CD4-positive, alpha-beta memory T cell (primary cell): ENCODE measurements at regions of chr5 and their contacts with region 1.

Region 1: GRCh38 chr5:159209438-159210305 is at the start of gene RNF145:
- DNase-seq: peak; percentile 93 to 96 (median 94)
- H3K4me3 ChIP-seq: peak within 1 kb of the TSS; percentile 82 to 85
- H3K4me3 Mint-ChIP-seq: peak within 1 kb of the TSS; percentile 93 to 99 (median 96)
- H3K27ac ChIP-seq: peak within 1 kb of the TSS; percentile 87
- H3K27ac Mint-ChIP-seq: peak within 1 kb of the TSS; percentile 96 to 100 (median 98)
- H3K4me1 ChIP-seq: peaks cover 33% of the 10 kb centered on the region
- H3K4me1 Mint-ChIP-seq: peaks cover 32 to 55% (median 38%) of the 10 kb centered on the region in 4 donors
- H3K27me3 ChIP-seq: no peaks in the 10 kb centered on the region
- H3K27me3 Mint-ChIP-seq: peaks cover 0 to 1% of the 10 kb centered on the region in 2 donors
- total RNA-seq, gene RNF145: 62.4 to 67.8 TPM

Region 2: GRCh38 chr5:158979749-158980521 is 229.7 kb before region 1 on chr5:
- CTCF ChIA-PET with region 1: no interaction called
- POLR2A ChIA-PET with region 1: no interaction called
- intact Hi-C with region 1: no loop called
- DNase-seq: no peak
- H3K4me3 ChIP-seq: no peak overlapping the region
- H3K4me3 Mint-ChIP-seq: no peak overlapping the region
- H3K27ac ChIP-seq: no peak overlapping the region
- H3K27ac Mint-ChIP-seq: peak overlapping the region in 1 of 7 donors; percentile 0
- H3K4me1 ChIP-seq: no peaks in the 10 kb centered on the region
- H3K4me1 Mint-ChIP-seq: peaks cover 0 to 2% (median under 1%) of the 10 kb centered on the region in 4 donors
- H3K27me3 ChIP-seq: no peaks in the 10 kb centered on the region
- H3K27me3 Mint-ChIP-seq: peaks cover 3 to 5% of the 10 kb centered on the region in 2 donors

Region 3: DNA sequence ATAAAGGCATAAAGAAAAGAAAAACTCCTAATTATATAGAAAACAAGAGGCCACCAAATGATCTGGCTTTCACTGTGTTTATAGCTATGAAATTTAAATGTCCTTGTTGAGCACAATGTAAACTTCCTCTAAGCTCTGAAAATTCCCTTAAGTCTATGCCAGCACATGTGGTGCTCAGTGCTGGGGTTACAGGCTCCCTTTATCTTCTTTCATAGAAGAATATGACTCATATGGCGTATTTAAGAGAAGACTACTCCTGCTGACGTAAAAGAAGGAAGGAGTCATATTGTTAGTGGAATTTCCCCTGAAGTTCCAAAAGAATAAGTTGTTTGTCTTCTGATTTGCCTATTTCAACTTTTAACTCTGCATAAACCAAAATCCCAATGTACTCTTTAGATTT is 30.7 kb before region 1 on chr5:
- CTCF ChIA-PET with region 1: interaction called, 7 read pairs
- POLR2A ChIA-PET with region 1: interaction called, 27 read pairs
- intact Hi-C with region 1: loop called (anchors 1 kb)
- DNase-seq: peak in 2 of 5 donors; percentile 6 to 58
- H3K4me3 ChIP-seq: no peak overlapping the region
- H3K4me3 Mint-ChIP-seq: peak overlapping the region in 1 of 8 donors; percentile 1
- H3K27ac ChIP-seq: no peak overlapping the region
- H3K27ac Mint-ChIP-seq: peak overlapping the region; percentile 37 to 90 (median 81)
- H3K4me1 ChIP-seq: peaks cover 82% of the 10 kb centered on the region
- H3K4me1 Mint-ChIP-seq: peaks cover 45 to 88% (median 63%) of the 10 kb centered on the region in 4 donors
- H3K27me3 ChIP-seq: no peaks in the 10 kb centered on the region
- H3K27me3 Mint-ChIP-seq: no peaks in the 10 kb centered on the region

Region 4: DNA sequence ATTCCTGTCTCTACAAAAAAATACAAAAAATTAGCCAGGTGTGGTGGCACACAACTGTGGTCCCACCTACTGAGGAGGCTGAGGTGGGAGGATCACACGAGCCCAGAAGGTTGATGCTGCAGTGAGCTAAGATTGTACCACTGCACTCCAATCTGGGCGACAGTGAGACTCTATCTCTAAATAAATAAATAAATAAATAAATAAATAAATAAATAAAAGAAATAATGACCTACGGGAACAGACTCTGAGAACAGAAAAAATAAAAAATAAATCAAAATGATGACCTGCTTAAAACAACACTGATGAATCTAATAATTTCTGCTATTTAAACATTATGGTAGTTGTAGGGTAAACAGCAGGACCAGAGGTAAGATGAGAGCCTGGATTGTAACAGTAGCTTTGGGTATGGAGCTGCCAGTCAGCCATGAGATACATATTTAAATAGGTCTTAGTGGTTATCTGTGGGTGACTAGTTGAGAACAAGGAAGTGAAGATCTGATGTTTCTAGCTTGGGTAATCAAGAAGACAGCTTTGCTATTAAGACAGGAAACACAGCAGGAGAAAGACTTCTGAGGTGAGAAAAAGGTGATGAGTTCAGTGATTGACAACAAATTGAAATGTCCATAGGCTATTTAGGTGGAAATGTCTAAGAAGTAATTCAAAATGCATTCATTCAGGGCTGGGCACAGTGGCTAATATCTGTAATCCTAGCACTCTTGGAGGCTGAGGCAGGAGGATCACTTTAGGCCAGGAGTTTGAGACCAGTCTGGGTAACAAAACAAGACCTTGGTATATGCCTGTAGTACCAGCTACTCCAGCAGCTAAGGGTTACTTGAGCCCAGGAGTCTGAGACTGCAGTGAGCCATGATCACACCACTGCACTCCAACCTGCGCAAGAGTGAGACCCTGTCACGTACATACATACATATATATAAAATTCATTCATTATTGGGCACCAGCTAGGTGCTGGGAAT is 11.3 kb before region 1 on chr5:
- CTCF ChIA-PET with region 1: interaction called, 20 read pairs
- POLR2A ChIA-PET with region 1: interaction called, 61 read pairs
- intact Hi-C with region 1: loop called (anchors 1 kb)
- DNase-seq: peak in 4 of 5 donors; percentile 23 to 33 (median 32)
- H3K4me3 ChIP-seq: no peak overlapping the region
- H3K4me3 Mint-ChIP-seq: peak overlapping the region in 7 of 8 donors; percentile 1 to 56 (median 32)
- H3K27ac ChIP-seq: no peak overlapping the region
- H3K27ac Mint-ChIP-seq: peak overlapping the region; percentile 17 to 84 (median 63)
- H3K4me1 ChIP-seq: peaks cover 49% of the 10 kb centered on the region
- H3K4me1 Mint-ChIP-seq: peaks cover 49 to 83% (median 68%) of the 10 kb centered on the region in 4 donors
- H3K27me3 ChIP-seq: no peaks in the 10 kb centered on the region
- H3K27me3 Mint-ChIP-seq: no peaks in the 10 kb centered on the region

Region 5: DNA sequence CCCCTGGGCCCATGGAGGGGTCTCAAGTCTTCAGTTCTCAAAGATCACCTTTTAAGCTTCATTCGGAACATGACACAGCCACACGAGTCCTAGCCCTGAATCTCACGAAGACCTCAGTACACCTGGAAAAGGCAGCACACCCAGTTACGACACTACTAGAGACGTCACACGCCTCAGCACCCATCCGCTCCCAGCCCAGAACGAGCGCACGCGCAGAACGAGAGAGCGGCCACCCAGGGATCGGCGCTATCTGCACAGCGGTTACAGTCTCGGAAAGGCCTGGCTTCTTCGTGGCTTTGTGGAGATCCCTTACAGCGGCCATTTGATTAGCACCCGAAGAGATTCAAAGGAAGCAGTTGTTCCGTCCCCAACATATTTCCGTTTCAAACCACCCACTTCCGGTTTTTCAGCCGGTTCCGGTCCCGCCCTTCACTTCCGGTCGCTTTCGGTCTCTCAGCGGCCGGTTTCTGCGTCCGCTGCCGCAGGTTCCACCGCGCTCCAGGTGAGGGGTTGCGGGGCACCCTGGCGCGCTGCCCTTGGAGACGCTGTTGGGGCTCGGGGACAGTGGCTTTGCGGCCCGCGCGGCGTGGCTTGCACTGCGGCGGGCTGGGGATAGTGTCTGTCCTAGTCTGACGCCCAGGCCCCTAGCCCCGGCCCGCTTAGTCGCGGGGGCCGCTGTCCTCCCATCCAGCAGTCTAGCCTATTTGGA is 53.3 kb after region 1 on chr5 and contains the start of gene UBLCP1:
- CTCF ChIA-PET with region 1: interaction called, 3 read pairs
- POLR2A ChIA-PET with region 1: interaction called, 29 read pairs
- intact Hi-C with region 1: loop called (anchors 1 kb)
- DNase-seq: peak; percentile 82 to 87 (median 86)
- H3K4me3 ChIP-seq: peak within 1 kb of the TSS; percentile 67 to 75
- H3K4me3 Mint-ChIP-seq: peak within 1 kb of the TSS; percentile 98 to 99 (median 98)
- H3K27ac ChIP-seq: peak within 1 kb of the TSS; percentile 89
- H3K27ac Mint-ChIP-seq: peak within 1 kb of the TSS; percentile 96 to 100 (median 99)
- H3K4me1 ChIP-seq: peaks cover 27% of the 10 kb centered on the region
- H3K4me1 Mint-ChIP-seq: peaks cover 34 to 66% (median 46%) of the 10 kb centered on the region in 4 donors
- H3K27me3 ChIP-seq: no peaks in the 10 kb centered on the region
- H3K27me3 Mint-ChIP-seq: no peaks in the 10 kb centered on the region
- total RNA-seq, gene UBLCP1: 31.6 to 33.4 TPM

Region 6: GRCh38 chr5:159419576-159419975 is 209.9 kb after region 1 on chr5:
- CTCF ChIA-PET with region 1: no interaction called
- POLR2A ChIA-PET with region 1: no interaction called
- intact Hi-C with region 1: no loop called
- DNase-seq: no peak
- H3K4me3 ChIP-seq: no peak overlapping the region
- H3K4me3 Mint-ChIP-seq: no peak overlapping the region
- H3K27ac ChIP-seq: no peak overlapping the region
- H3K27ac Mint-ChIP-seq: no peak overlapping the region
- H3K4me1 ChIP-seq: no peaks in the 10 kb centered on the region
- H3K4me1 Mint-ChIP-seq: peaks cover 2 to 10% (median 5%) of the 10 kb centered on the region in 4 donors
- H3K27me3 ChIP-seq: no peaks in the 10 kb centered on the region
- H3K27me3 Mint-ChIP-seq: no peaks in the 10 kb centered on the region

Region 7: GRCh38 chr5:159515909-159516415 is 306.3 kb after region 1 on chr5:
- CTCF ChIA-PET with region 1: no interaction called
- POLR2A ChIA-PET with region 1: no interaction called
- intact Hi-C with region 1: no loop called
- DNase-seq: peak; percentile 41 to 59 (median 56)
- H3K4me3 ChIP-seq: no peak overlapping the region
- H3K4me3 Mint-ChIP-seq: peak overlapping the region in 2 of 8 donors; percentile 30 to 71
- H3K27ac ChIP-seq: no peak overlapping the region
- H3K27ac Mint-ChIP-seq: no peak overlapping the region
- H3K4me1 ChIP-seq: no peaks in the 10 kb centered on the region
- H3K4me1 Mint-ChIP-seq: peaks cover 5 to 8% (median 8%) of the 10 kb centered on the region in 4 donors
- H3K27me3 ChIP-seq: no peaks in the 10 kb centered on the region
- H3K27me3 Mint-ChIP-seq: no peaks in the 10 kb centered on the region

Region 8: DNA sequence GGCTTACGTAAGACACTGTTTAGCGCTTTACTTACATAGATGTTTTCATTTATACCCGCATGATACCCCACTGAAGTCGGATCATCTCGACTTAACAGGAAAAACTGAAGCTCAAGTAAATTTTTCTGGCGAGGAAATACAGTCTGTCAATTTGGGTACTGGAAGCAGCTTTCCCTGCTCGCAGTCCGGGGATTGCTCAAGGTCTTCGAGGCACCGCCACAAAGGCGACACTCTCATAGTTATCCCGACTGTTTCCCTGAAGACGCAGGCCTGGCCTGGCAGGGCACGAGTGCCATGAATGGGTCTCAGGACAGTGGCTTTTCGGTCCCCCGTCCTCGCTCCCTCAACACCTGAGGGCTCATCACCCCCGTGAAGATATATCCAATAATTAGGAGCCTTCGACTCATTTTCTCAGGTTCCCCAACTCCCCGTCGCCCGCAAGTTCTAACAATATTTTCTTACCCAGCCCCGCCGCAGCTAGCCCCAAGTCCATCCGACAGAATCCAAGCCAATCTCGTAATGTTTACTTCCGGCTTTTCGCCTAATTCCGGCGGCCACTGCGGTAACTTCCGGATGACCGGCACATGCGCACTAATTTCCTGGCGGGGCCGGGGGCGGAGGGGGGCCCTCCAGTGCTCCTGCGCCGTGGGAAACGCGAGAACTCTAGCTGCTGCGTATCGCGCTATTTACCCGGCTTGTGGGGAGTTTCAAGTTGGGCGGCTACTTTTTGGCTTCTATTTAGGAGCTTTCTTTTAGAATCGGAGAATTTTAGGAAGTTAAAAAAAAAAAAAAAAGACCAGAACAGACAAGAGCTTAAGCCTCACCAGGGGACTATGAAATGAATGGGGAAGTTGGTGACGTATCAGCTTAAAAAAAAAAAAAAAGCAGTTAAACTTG is 1209.1 kb after region 1 on chr5 and contains the start of gene SLU7:
- CTCF ChIA-PET with region 1: no interaction called
- POLR2A ChIA-PET with region 1: interaction called, 5 read pairs
- intact Hi-C with region 1: loop called (anchors 5 kb)
- DNase-seq: peak; percentile 91 to 92 (median 92)
- H3K4me3 ChIP-seq: peak within 1 kb of the TSS; percentile 80 to 85
- H3K4me3 Mint-ChIP-seq: peak within 1 kb of the TSS; percentile 93 to 100 (median 96)
- H3K27ac ChIP-seq: peak within 1 kb of the TSS; percentile 98
- H3K27ac Mint-ChIP-seq: peak within 1 kb of the TSS; percentile 96 to 99 (median 98)
- H3K4me1 ChIP-seq: peaks cover 61% of the 10 kb centered on the region
- H3K4me1 Mint-ChIP-seq: peaks cover 46 to 84% (median 61%) of the 10 kb centered on the region in 4 donors
- H3K27me3 ChIP-seq: no peaks in the 10 kb centered on the region
- H3K27me3 Mint-ChIP-seq: no peaks in the 10 kb centered on the region
- total RNA-seq, gene SLU7: 86.8 to 93.9 TPM